GM12878 (cell line): ENCODE measurements at regions of chr22 and their contacts with region 1.

Region 1: DNA sequence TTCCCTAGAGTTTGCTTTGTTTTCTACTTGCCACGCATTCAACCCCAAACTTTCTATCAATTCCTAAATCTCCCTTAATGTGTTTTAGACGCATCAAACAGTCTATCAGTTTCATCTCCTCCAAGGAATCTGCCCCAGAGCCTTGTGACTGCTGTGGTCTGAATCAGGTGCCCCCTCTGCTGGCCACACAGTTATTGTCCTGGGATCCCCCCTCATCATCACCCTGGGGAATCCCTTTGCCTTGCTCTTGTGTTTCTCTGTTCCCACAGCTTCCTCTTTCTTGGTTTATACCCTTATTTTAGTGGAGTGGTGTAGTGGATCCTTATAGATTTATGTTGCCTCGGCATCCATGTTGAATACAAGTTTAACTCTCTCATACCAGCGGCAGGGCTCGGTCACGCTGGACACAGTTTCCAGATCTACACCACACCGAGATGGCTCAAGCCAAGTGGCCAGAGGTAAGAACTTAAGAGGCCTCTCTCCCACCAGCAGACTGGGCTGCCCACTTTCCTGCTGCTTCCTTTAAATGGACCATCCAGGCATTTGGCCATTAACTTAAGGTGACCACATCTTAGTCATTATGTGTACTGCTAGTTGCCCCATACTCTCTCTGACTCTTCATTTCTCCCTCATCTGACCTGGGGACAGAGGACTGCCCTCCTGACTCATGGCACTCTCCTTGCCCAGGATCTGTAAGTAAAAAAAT is 8.2 kb downstream of the UPB1 start:
- DNase-seq: peak; percentile 85
- ATAC-seq: peak; percentile 68
- H3K4me3 ChIP-seq: peak overlapping the region; percentile 30; the same call in 1 of the 2 replicates
- H3K27ac ChIP-seq: peak overlapping the region; percentile 68
- H3K4me1 ChIP-seq: peaks cover 39% of the 10 kb centered on the region
- H3K27me3 ChIP-seq: no peaks in the 10 kb centered on the region; a peak in 1 of 4 replicates
- CTCF ChIP-seq: peak; percentile 76 to 90 (median 87)
- EP300 ChIP-seq: peak; percentile 47 to 57; a peak in 1 of 4 replicates
- POLR2A ChIP-seq: no peak
- RAD21 ChIP-seq: peak; percentile 84

Region 2: DNA sequence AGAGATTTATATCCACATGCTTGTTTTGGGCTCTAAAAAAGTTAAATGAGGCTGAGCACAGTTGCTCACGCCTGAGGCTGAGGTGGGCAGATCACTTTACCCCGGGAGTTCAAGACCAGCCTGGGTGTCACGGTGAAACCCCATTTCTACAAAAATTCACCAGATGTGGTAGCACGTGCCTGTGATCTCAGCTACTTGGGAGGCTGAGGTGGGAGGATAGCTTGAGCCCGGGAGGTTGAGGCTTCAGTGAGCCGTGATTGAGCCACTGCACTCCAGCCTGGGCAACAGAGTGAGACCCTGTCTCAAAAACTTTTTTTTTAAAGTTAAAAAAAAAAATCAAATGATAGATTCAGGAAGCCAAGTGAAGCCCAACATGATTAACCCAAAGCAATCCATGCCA is 696.0 kb before region 1 on chr22:
- CTCF ChIA-PET with region 1: no interaction called
- POLR2A ChIA-PET with region 1: no interaction called
- RAD21 ChIA-PET with region 1: no interaction called
- SMC1A ChIA-PET with region 1: no interaction called
- in situ Hi-C with region 1: no loop called
- intact Hi-C with region 1: no loop called
- DNase-seq: no peak
- ATAC-seq: no peak
- H3K4me3 ChIP-seq: peak overlapping the region; percentile 54; the same call in 1 of the 2 replicates
- H3K27ac ChIP-seq: peak overlapping the region; percentile 97
- H3K4me1 ChIP-seq: peaks cover 48% of the 10 kb centered on the region
- H3K27me3 ChIP-seq: no peaks in the 10 kb centered on the region
- CTCF ChIP-seq: no peak
- EP300 ChIP-seq: no peak
- POLR2A ChIP-seq: no peak
- RAD21 ChIP-seq: no peak

Region 3: GRCh38 chr22:24325105-24325757 is 178.1 kb before region 1 on chr22:
- CTCF ChIA-PET with region 1: interaction called, 9 read pairs
- POLR2A ChIA-PET with region 1: no interaction called
- RAD21 ChIA-PET with region 1: interaction called, 4 read pairs
- SMC1A ChIA-PET with region 1: interaction called, 6 read pairs
- in situ Hi-C with region 1: no loop called
- intact Hi-C with region 1: loop called (anchors 1 kb)
- DNase-seq: peak; percentile 62
- ATAC-seq: peak; percentile 92
- H3K4me3 ChIP-seq: no peak overlapping the region
- H3K27ac ChIP-seq: peak overlapping the region; percentile 10; the same call in 1 of the 2 replicates
- H3K4me1 ChIP-seq: no peaks in the 10 kb centered on the region
- H3K27me3 ChIP-seq: no peaks in the 10 kb centered on the region
- CTCF ChIP-seq: peak; percentile 70 to 93 (median 75); a peak in 5 of 6 replicates
- EP300 ChIP-seq: no peak
- POLR2A ChIP-seq: no peak
- RAD21 ChIP-seq: peak; percentile 85

Region 4: DNA sequence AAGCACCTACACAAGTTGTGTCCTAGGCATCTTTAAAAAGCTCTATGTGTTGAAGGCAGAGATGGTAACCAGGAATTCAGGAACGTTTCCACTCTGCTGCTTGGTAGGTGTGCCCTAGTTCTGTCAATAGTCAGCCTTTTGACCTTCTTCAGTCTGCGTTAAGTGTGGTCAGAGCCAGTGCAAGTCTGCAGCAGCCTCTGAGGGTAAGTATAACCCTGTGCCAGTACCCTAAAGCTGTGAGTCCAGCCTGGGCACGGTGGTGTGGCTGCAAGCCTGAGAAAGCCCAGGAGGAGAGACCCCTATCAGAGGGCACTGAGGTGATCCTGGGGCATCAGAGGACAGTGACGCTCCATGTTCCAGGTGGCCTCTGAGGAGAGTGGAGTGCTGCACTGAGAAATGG is 152.7 kb before region 1 on chr22:
- CTCF ChIA-PET with region 1: no interaction called
- POLR2A ChIA-PET with region 1: no interaction called
- RAD21 ChIA-PET with region 1: no interaction called
- SMC1A ChIA-PET with region 1: no interaction called
- in situ Hi-C with region 1: no loop called
- intact Hi-C with region 1: no loop called
- DNase-seq: no peak
- ATAC-seq: no peak
- H3K4me3 ChIP-seq: no peak overlapping the region
- H3K27ac ChIP-seq: no peak overlapping the region
- H3K4me1 ChIP-seq: no peaks in the 10 kb centered on the region
- H3K27me3 ChIP-seq: no peaks in the 10 kb centered on the region
- CTCF ChIP-seq: no peak
- EP300 ChIP-seq: no peak
- POLR2A ChIP-seq: no peak
- RAD21 ChIP-seq: no peak

Region 5: GRCh38 chr22:24423519-24424000 is 79.7 kb before region 1 on chr22:
- CTCF ChIA-PET with region 1: interaction called, 332 read pairs
- POLR2A ChIA-PET with region 1: interaction called, 8 read pairs
- RAD21 ChIA-PET with region 1: interaction called, 107 read pairs
- SMC1A ChIA-PET with region 1: interaction called, 13 read pairs
- in situ Hi-C with region 1: no loop called
- intact Hi-C with region 1: loop called (anchors 1 kb)
- DNase-seq: no peak
- ATAC-seq: peak; percentile 64
- H3K4me3 ChIP-seq: peak overlapping the region; percentile 77; the same call in 1 of the 2 replicates
- H3K27ac ChIP-seq: no peak overlapping the region
- H3K4me1 ChIP-seq: peaks cover 19% of the 10 kb centered on the region
- H3K27me3 ChIP-seq: no peaks in the 10 kb centered on the region
- CTCF ChIP-seq: peak; percentile 62 to 86 (median 69); a peak in 5 of 6 replicates
- EP300 ChIP-seq: no peak
- POLR2A ChIP-seq: no peak; the same call in 1 of the 2 replicates
- RAD21 ChIP-seq: peak; percentile 73

Region 6: DNA sequence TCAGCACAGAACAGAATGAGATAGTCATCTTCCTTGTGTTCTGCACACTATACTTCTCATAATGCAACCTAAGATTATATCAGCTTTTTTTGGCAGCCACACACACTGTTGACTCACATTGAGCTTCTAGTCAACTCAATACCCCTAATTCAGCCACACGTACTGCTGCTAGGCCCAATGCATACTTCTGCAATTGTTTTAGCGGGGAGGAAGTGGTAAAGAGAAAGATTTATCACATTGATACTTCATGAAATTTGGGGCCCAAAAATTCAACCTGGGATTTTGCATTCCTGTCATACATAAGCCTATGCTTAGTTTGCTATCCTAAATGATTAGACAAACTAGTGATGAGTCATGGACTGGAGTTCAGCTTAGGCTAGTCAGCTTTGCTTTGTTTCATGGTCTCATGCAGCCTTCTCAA is 16.8 kb before region 1 on chr22:
- CTCF ChIA-PET with region 1: interaction called, 10 read pairs
- POLR2A ChIA-PET with region 1: interaction called, 4 read pairs
- RAD21 ChIA-PET with region 1: interaction called, 8 read pairs
- SMC1A ChIA-PET with region 1: interaction called, 6 read pairs
- in situ Hi-C with region 1: no loop called
- intact Hi-C with region 1: no loop called
- DNase-seq: no peak
- ATAC-seq: peak; percentile 84
- H3K4me3 ChIP-seq: no peak overlapping the region
- H3K27ac ChIP-seq: no peak overlapping the region
- H3K4me1 ChIP-seq: no peaks in the 10 kb centered on the region
- H3K27me3 ChIP-seq: no peaks in the 10 kb centered on the region
- CTCF ChIP-seq: no peak
- EP300 ChIP-seq: no peak
- POLR2A ChIP-seq: no peak
- RAD21 ChIP-seq: no peak

Region 7: GRCh38 chr22:24516301-24516737 is 13.0 kb after region 1 on chr22:
- CTCF ChIA-PET with region 1: interaction called, 213 read pairs
- POLR2A ChIA-PET with region 1: interaction called, 28 read pairs
- RAD21 ChIA-PET with region 1: interaction called, 64 read pairs
- SMC1A ChIA-PET with region 1: interaction called, 113 read pairs
- in situ Hi-C with region 1: no loop called
- intact Hi-C with region 1: no loop called
- DNase-seq: no peak
- ATAC-seq: peak; percentile 66
- H3K4me3 ChIP-seq: no peak overlapping the region
- H3K27ac ChIP-seq: no peak overlapping the region; the same call in 1 of the 2 replicates
- H3K4me1 ChIP-seq: peaks cover 41% of the 10 kb centered on the region
- H3K27me3 ChIP-seq: no peaks in the 10 kb centered on the region
- CTCF ChIP-seq: no peak
- EP300 ChIP-seq: no peak
- POLR2A ChIP-seq: no peak
- RAD21 ChIP-seq: no peak